AG04449 (cell line): ENCODE measurements at regions of chr6 and their contacts with region 1.

Region 1: DNA sequence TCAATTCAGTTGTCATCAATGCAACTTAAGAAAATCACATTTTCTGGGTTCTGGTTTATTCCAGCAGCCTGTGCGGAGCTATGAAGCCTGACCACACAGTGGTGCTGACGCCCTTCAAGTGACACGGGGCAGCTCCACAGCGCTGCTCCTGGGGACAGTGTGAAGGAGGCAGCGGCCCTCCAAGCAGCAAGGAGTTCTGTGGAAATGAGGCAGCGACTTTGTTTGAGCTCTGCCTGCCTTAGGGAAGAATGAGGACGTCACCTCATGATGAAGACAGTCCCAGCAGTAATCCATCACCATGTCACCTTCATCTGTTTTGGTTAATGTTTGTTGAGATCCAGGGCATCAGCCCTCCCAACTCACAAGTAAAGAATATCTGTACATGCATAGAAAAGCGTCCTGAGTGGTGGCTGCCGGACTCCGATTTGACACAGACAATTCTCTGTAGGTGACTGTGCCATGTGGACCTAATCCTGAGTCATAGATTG is 168.5 kb upstream of the UST start:
- DNase-seq: peak; percentile 24
- H3K4me3 ChIP-seq: no peak overlapping the region
- CTCF ChIP-seq: peak; percentile 90

Region 2: GRCh38 chr6:148565321-148565926 is 12.9 kb before region 1 on chr6:
- CTCF ChIA-PET with region 1: interaction called, 18 read pairs
- POLR2A ChIA-PET with region 1: no interaction called
- DNase-seq: no peak
- H3K4me3 ChIP-seq: no peak overlapping the region
- CTCF ChIP-seq: no peak

Region 3: DNA sequence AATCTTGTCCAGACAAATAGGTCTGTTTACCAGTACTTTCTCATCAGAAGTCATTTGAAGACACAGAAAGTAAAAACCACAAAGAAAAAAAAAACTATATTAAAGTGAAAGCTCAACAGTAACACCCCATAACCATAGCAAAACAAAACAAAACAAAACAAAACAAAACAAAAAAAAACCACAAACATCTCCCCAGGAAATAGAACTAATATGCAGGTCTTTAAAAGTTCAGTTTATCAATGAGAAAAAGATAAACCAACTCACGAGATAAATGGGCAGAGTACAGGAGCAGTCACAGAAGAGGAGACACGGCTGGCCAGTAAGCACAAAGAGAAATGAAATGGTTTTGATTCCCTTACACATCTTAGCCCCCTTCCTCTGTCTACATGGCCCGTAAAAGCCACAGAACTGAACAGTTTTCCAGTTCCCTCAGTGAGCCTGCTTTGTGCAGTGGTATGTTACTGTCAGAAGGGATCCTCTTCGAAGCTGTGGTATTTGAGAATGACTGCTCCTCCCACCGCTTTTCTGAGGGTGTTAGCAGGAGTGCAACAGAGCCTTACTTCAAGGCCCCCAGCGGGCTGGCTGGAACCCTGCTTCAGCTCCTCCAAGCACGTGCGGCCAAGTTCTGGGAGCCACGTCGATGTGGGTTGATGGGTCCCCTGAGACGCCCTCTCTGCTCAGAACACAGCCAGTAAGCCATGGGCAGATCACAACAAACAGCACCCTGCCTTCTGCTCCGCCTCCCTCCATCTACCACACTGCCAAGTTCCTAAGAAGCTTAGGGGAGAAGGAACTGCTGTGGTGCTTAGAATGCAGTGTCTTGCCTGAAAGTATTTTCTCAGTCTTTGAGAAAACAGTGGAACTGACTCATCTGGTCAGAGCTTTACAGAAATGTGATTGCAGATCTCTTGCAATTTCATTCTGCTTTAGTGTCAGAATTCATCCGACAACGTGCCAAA is 182.6 kb after region 1 on chr6:
- CTCF ChIA-PET with region 1: interaction called, 10 read pairs
- POLR2A ChIA-PET with region 1: no interaction called
- DNase-seq: peak; percentile 90
- H3K4me3 ChIP-seq: peak overlapping the region; percentile 55
- CTCF ChIP-seq: no peak

Region 4: GRCh38 chr6:148959004-148959403 is 380.7 kb after region 1 on chr6:
- CTCF ChIA-PET with region 1: interaction called, 19 read pairs
- POLR2A ChIA-PET with region 1: no interaction called
- DNase-seq: no peak
- H3K4me3 ChIP-seq: no peak overlapping the region
- CTCF ChIP-seq: no peak

Region 5: DNA sequence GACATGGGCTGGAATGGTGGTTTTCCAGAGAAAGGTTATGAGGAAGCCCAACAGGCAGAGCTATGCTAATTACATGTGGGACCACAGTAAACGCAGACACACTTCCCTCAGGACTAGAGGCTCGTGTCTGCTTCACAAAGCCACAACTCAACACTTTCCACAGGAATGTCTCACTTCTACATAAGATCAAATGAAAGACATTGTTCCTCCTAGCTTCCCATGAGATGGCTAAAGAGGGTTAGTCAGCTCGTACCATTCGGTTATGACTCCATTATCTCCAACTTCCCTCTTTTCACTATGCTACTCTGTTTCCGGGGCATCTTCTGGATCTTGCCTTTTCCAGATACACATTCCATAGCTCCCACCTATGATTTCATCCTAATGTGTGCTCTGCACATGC is 935.6 kb after region 1 on chr6:
- CTCF ChIA-PET with region 1: interaction called, 10 read pairs
- POLR2A ChIA-PET with region 1: no interaction called
- DNase-seq: no peak
- H3K4me3 ChIP-seq: no peak overlapping the region
- CTCF ChIP-seq: no peak